H1 (cell line): ENCODE measurements at regions of chr11 and their contacts with region 1.

Region 1: GRCh38 chr11:60872961-60873524 is 5.7 kb downstream of the ZP1 start:
- DNase-seq: peak in 1 of 2 experiments; percentile 60
- H3K4me3 ChIP-seq: no peak overlapping the region
- H3K27ac ChIP-seq: no peak overlapping the region
- H3K4me1 ChIP-seq: peaks cover 0 to 4% (median 0%) of the 10 kb centered on the region in 4 experiments; a peak in 4 of 7 replicates
- H3K27me3 ChIP-seq: no peaks in the 10 kb centered on the region
- CTCF ChIP-seq: no peak
- EP300 ChIP-seq: no peak
- POLR2A ChIP-seq: no peak
- RAD21 ChIP-seq: no peak

Region 2: DNA sequence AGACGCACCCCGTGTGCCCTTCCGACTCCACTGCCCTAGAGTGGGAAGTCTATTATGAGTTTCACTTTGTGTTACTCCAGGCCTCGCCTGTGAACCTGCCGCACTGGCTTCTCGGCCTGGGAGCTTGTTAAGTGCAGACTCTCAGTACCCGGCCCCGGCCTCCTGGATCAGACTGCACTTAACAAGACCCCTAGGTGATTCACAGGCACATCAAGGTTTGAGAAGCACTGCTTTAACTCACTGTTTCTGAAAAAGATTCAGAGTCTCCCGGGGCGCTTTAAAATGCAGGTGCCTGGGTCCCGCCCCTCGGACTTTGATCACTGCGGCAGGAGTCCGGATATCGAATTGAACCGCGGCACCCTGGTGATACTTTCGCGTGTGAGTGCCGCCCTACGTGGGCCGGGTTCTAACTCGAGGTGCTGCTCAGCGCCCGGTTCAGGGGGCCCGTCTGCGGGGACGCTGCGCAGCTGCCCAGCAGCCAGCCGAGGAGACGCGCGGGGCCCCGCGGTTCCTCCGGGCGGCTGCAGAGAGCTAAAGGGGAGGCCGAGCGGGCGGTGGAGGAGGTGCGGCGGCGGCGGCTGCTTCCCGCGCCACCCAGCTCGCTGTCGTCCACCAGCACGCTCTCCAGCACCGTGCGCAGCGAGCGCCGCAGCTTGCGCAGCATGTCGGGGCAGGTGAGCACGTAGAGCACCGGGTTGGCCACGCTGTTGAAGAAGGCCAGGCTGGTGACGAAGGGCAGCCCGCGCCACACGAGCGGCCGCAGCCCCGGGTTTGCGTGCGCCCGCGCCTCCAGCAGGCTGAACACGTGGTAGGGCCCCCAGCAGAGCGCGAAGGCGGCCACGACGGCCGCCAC is 20.7 kb before region 1 on chr11:
- CTCF ChIA-PET with region 1: interaction called, 5 read pairs
- POLR2A ChIA-PET with region 1: interaction called, 20 read pairs
- DNase-seq: peak in 1 of 2 experiments; percentile 60
- H3K4me3 ChIP-seq: peak overlapping the region in 3 of 4 experiments; percentile 2 to 49 (median 5); a peak in 4 of 8 replicates
- H3K27ac ChIP-seq: no peak overlapping the region
- H3K4me1 ChIP-seq: peaks cover 0 to 5% (median 0%) of the 10 kb centered on the region in 4 experiments; a peak in 2 of 7 replicates
- H3K27me3 ChIP-seq: peaks cover 3 to 26% (median 16%) of the 10 kb centered on the region in 4 experiments; a peak in 6 of 7 replicates
- CTCF ChIP-seq: no peak
- EP300 ChIP-seq: no peak
- POLR2A ChIP-seq: no peak
- RAD21 ChIP-seq: no peak

Region 3: DNA sequence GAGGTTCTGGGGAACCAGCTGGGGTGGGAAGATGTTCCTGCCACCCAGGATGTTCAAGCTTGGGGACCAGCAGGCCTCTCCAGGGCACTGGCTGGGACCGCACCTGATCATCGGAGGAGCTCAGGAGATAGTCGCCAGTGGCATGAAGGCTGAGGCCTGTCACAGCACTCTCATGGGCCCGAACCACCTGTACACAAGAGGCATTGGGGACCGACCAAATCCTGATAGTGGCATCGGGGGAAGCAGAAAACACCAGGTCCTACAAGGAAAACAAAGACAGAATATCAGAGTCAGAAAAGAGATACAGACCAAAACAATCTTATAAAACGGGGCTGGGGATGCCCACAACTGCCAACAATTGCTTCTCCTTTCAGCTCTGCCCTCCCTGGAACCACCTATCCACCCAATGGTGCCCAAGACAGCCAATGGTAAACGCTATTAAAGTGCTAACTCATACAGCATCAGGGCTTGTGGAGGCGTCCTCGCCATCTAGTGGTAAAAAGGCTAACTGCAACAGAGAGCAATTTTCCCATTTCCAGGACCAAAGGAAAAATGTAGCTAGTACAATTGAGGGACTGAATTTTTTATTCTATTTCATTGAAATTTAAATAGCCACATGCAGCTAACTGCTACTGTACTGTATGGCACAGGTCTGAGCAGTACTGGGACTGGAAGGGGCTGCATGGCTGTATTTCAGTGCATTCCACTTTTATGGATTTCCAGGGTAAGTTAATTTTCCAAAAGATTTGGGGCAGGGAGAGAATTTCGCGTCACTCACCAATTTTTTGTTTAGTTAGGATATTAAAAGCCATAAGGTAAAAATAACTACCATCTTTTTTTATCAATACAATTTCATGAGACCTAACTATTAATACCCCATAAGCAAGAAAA is 26.2 kb after region 1 on chr11:
- CTCF ChIA-PET with region 1: interaction called, 18 read pairs
- POLR2A ChIA-PET with region 1: no interaction called
- DNase-seq: peak in 1 of 2 experiments; percentile 57
- H3K4me3 ChIP-seq: no peak overlapping the region
- H3K27ac ChIP-seq: 0 out of 2 replicates have a peak overlapping the region, but pooled peaks have one; percentile 42
- H3K4me1 ChIP-seq: peaks cover 0 to under 1% (median 0%) of the 10 kb centered on the region in 4 experiments; a peak in 1 of 7 replicates
- H3K27me3 ChIP-seq: no peaks in the 10 kb centered on the region
- CTCF ChIP-seq: peak; percentile 21 to 91 (median 74)
- EP300 ChIP-seq: no peak
- POLR2A ChIP-seq: no peak
- RAD21 ChIP-seq: peak; percentile 57 to 68

Region 4: DNA sequence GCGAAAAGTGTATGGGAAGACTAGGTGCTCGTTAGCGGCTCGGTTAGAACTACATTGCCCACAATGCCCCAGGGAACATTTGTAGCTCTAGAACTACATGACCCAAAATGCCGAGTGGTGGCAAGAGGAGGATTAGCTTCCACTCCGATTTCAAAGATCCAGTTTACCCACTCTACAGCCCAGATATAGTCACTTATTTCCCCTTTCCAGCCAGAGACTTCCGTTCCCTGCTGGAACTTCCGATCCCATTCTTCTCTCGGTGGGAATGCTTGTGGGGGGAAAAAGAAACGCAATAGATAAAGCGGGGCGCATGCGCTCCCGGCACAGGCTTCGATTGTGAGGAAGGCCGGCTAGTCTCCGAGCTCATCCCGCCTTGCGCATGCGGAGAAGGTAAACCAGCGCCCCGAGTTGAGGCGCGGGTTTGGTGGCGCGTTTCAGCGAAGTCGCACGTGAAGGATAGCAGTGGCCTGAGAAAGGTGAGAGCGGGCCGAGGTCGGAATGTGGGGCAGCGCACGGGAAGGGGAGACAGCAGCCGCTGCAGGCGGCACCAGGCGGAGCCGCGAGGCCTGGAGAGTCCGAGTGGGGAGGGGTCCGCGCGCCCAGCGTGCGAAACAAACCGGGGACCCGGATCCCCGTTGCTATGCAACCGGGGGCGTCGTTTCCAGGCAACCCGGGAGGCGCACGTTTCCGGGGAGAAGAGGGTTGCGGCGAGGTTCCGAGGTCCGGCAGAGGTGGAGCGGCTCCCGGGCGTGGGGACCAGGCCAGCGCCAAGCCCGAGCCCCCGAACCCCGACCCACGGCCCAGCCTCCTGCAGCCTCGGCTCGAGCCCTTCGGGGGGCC is 41.0 kb after region 1 on chr11 and contains the start of gene TMEM109:
- CTCF ChIA-PET with region 1: no interaction called
- POLR2A ChIA-PET with region 1: no interaction called
- DNase-seq: peak; percentile 60 to 90
- H3K4me3 ChIP-seq: peak within 1 kb of the TSS; percentile 63 to 82 (median 72)
- H3K27ac ChIP-seq: peak within 1 kb of the TSS; percentile 78
- H3K4me1 ChIP-seq: peaks cover 10 to 27% (median 18%) of the 10 kb centered on the region in 4 experiments
- H3K27me3 ChIP-seq: peaks cover 0 to 2% (median 0%) of the 10 kb centered on the region in 4 experiments; a peak in 1 of 7 replicates
- CTCF ChIP-seq: no peak
- EP300 ChIP-seq: no peak
- POLR2A ChIP-seq: peak in 1 of 2 experiments; percentile 44; a peak in 2 of 3 replicates
- RAD21 ChIP-seq: no peak
- total RNA-seq, gene TMEM109: 30.3 and 30.7 TPM in 2 replicates

Region 5: GRCh38 chr11:61061081-61061826 is 188.2 kb after region 1 on chr11:
- CTCF ChIA-PET with region 1: no interaction called
- POLR2A ChIA-PET with region 1: no interaction called
- DNase-seq: no peak
- H3K4me3 ChIP-seq: no peak overlapping the region
- H3K27ac ChIP-seq: no peak overlapping the region
- H3K4me1 ChIP-seq: no peaks in the 10 kb centered on the region
- H3K27me3 ChIP-seq: no peaks in the 10 kb centered on the region
- CTCF ChIP-seq: no peak
- EP300 ChIP-seq: no peak
- POLR2A ChIP-seq: no peak
- RAD21 ChIP-seq: no peak